Dendritic cell treated with granulocyte-macrophage colony-stimulating factor and Interleukin-4, amounts not matched to agents 40 ng/mL and 50 ng/mL, for 4 days (primary cell): ENCODE measurements at regions of chr7 and their contacts with region 1.

Region 1: GRCh38 chr7:148987010-148987750 is 41.1 kb downstream of the PDIA4 start:
- H3K4me3 Mint-ChIP-seq: peak overlapping the region; percentile 86
- H3K27ac Mint-ChIP-seq: peak overlapping the region; percentile 86
- H3K4me1 Mint-ChIP-seq: peaks cover 40% of the 10 kb centered on the region
- H3K27me3 Mint-ChIP-seq: peaks cover 5% of the 10 kb centered on the region

Region 2: GRCh38 chr7:148633761-148634160 is 353.4 kb before region 1 on chr7:
- intact Hi-C with region 1: no loop called
- H3K4me3 Mint-ChIP-seq: no peak overlapping the region
- H3K27ac Mint-ChIP-seq: no peak overlapping the region
- H3K4me1 Mint-ChIP-seq: peaks cover 35% of the 10 kb centered on the region
- H3K27me3 Mint-ChIP-seq: no peaks in the 10 kb centered on the region

Region 3: GRCh38 chr7:149028346-149029109 is 41.3 kb after region 1 on chr7 and contains the start of gene PDIA4:
- intact Hi-C with region 1: loop called (anchors 5 kb)
- H3K4me3 Mint-ChIP-seq: peak within 1 kb of the TSS; percentile 96
- H3K27ac Mint-ChIP-seq: peak within 1 kb of the TSS; percentile 97
- H3K4me1 Mint-ChIP-seq: peaks cover 35% of the 10 kb centered on the region
- H3K27me3 Mint-ChIP-seq: peaks cover 5% of the 10 kb centered on the region

Region 4: GRCh38 chr7:149050941-149051340 is 63.8 kb after region 1 on chr7:
- intact Hi-C with region 1: no loop called
- H3K4me3 Mint-ChIP-seq: no peak overlapping the region
- H3K27ac Mint-ChIP-seq: no peak overlapping the region
- H3K4me1 Mint-ChIP-seq: peaks cover 14% of the 10 kb centered on the region
- H3K27me3 Mint-ChIP-seq: peaks cover 9% of the 10 kb centered on the region